ENCODE measurements at regions of chr22 and their contacts with region 1.

Region 1: DNA sequence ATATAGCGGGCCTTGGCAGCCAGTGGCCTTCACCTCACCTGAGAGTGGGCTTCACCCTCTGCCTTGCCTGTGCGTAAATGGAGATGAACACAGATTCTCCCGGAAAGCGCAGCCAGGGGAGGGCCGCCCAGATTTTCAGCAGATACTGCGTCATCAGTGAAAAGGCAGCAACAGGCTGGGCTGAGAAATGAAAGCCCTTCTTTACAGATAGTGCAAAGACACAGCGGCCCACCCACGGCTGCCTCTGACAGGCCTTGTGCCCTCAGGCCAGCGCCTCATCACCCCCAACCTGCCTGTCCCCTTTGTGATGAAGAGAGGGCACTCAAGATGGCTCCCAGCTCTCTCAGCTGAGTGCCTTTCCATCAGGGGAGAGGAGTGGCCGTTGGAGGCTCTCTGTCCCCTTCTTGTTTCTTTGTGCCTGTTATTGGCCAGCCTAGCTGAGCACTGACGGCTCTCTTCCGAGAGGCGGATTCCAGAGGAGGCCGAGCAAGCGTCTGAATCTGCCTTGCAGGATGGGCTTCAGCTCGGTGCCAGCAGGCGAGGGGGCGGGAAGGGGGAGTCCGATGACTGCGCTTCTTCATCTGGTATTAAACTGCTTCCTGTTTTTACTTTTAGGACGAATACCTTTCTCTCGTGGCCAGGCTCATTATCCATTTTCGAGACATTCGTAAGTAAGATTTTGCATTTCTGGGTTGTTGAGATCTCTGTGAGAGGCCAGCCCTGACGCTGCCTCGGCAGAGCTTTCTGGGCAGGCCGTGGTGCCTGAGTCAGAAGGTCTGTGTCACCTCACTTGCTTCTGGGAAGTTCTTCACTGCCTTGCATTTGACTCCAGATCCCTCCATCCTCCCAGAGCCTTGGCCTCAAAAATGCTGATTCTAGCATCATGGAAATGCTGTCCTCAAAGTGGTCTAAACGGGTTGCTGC is 43.7 kb downstream of the MED15 start:
- DNase-seq: peak in 2 of 5 donors; percentile 58 to 69
- ATAC-seq: peak in 2 of 4 donors; percentile 18 to 45
- H3K4me3 ChIP-seq: peak overlapping the region in 4 of 12 donors; percentile 7 to 27 (median 19)
- H3K27ac ChIP-seq: peak overlapping the region; percentile 78 to 95 (median 88)
- H3K4me1 ChIP-seq: peaks cover 23 to 100% (median 69%) of the 10 kb centered on the region in 12 donors
- H3K27me3 ChIP-seq: no peaks in the 10 kb centered on the region
- CTCF ChIP-seq: no peak
- POLR2A ChIP-seq: no peak

Region 2: GRCh38 chr22:20507253-20508066 is 43.6 kb before region 1 on chr22 and contains the start of gene MED15:
- intact Hi-C with region 1: loop called in 7 of 10 experiments (anchors 2 to 5 kb)
- DNase-seq: peak; percentile 92 to 95 (median 93)
- ATAC-seq: peak; percentile 90 to 94 (median 94)
- H3K4me3 ChIP-seq: peak within 1 kb of the TSS; percentile 58 to 97 (median 82)
- H3K27ac ChIP-seq: peak within 1 kb of the TSS; percentile 77 to 97 (median 94)
- H3K4me1 ChIP-seq: peaks cover 0 to 48% (median 37%) of the 10 kb centered on the region in 12 donors
- H3K27me3 ChIP-seq: no peaks in the 10 kb centered on the region
- CTCF ChIP-seq: no peak
- POLR2A ChIP-seq: peak; percentile 37 to 82
- total RNA-seq, gene MED15: 27.9 to 78.3 (median 43.0) TPM

Region 3: DNA sequence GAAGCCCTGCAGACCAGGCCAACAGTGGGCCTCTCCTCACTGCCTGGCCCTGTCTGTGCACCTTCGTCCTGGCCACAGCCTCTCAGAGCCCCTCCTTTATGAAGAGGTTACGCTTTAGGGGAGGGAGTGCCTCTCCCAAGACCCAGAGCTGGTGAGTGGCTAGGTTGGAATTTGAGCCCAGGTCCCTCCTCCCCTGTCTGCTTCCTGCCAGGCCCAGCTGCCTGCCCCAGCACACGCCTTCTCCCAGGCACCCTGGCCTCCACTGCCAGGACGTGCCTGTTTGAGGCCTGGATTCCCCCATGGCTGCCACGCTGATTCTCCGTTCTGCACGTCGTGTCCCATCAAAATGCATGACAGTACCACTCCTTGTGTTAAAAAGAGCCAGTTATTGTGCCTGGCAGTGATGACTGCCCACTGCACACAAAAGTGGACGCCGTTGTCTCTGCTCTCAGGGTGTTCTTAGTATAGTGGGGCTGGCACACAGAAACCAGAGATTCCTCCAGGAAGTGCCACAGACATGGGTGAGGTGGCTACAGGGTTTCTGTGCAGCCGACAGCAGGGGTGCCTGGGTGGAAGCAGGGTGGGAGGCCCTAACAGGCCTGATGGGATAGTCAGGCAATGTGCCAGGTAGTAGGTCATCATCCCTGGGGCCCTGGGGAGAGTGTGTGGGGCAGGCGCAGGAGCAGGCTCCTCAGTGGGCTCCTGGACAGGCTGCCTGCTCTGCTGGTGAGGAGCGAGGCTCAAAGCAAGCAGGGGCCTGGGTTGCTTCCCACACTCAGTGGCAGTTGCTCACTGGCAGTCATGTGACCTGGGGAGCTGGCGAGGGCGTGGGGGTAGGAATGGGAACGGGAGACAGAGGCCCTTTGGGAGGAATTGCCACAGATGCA is 19.5 kb before region 1 on chr22:
- intact Hi-C with region 1: loop called in 1 of 10 experiments (anchors 2 kb)
- DNase-seq: peak; percentile 61 to 69 (median 64)
- ATAC-seq: peak; percentile 86 to 91 (median 90)
- H3K4me3 ChIP-seq: no peak overlapping the region
- H3K27ac ChIP-seq: peak overlapping the region; percentile 1 to 90 (median 78)
- H3K4me1 ChIP-seq: peaks cover 17 to 78% (median 65%) of the 10 kb centered on the region in 12 donors
- H3K27me3 ChIP-seq: no peaks in the 10 kb centered on the region
- CTCF ChIP-seq: no peak
- POLR2A ChIP-seq: no peak

Region 4: GRCh38 chr22:20536590-20537324 is 14.3 kb before region 1 on chr22:
- intact Hi-C with region 1: loop called in 1 of 10 experiments (anchors 2 kb)
- DNase-seq: peak; percentile 62 to 82 (median 65)
- ATAC-seq: peak; percentile 55 to 74 (median 67)
- H3K4me3 ChIP-seq: no peak overlapping the region
- H3K27ac ChIP-seq: peak overlapping the region in 8 of 12 donors; percentile 11 to 74 (median 56)
- H3K4me1 ChIP-seq: peaks cover 6 to 73% (median 50%) of the 10 kb centered on the region in 12 donors
- H3K27me3 ChIP-seq: no peaks in the 10 kb centered on the region
- CTCF ChIP-seq: no peak
- POLR2A ChIP-seq: no peak